Activated naive CD4-positive, alpha-beta T cell treated with anti-CD3 and anti-CD28 coated beads, Interleukin-2, amount 10 ng/mL, durations not matched to agents 7 days and 5 days (primary cell): ENCODE measurements at regions of chr1 and their contacts with region 1.

Region 1: GRCh38 chr1:84772428-84772943 is 82.2 kb upstream of the SSX2IP start:
- DNase-seq: peak; percentile 84
- H3K4me3 Mint-ChIP-seq: no peak overlapping the region
- H3K27ac Mint-ChIP-seq: no peak overlapping the region
- H3K4me1 Mint-ChIP-seq: no peaks in the 10 kb centered on the region
- H3K27me3 Mint-ChIP-seq: peaks cover 29% of the 10 kb centered on the region

Region 2: GRCh38 chr1:84620720-84621313 is 151.7 kb before region 1 on chr1:
- CTCF ChIA-PET with region 1: no interaction called
- DNase-seq: peak; percentile 82
- H3K4me3 Mint-ChIP-seq: peak overlapping the region; percentile 87
- H3K27ac Mint-ChIP-seq: peak overlapping the region; percentile 85
- H3K4me1 Mint-ChIP-seq: peaks cover 14% of the 10 kb centered on the region
- H3K27me3 Mint-ChIP-seq: peaks cover 14% of the 10 kb centered on the region

Region 3: DNA sequence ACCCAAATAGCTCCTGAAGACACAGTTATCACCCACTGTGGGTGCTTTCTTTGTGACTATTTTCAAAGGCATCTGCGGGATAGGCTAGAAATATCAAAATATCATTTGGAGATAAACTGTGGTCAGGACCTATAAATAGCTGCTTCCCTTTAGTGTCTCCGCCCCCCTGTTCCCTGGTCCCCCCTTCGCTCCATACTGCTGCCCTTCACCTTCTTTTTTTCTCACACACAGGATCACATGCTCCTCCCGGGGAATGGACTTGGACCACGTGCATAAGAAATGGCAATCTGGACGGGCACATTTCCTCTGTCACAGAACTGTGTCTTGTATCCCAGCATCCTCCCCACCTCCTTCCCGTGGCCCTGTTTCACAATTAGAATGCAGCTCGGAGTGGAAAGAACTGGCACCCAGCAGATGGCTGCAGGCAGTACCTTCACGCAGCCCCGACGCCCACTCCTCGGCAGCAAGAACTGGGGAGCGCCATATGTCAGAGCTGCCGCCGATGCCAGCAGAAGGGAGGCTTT is 13.5 kb before region 1 on chr1:
- CTCF ChIA-PET with region 1: interaction called, 15 read pairs
- DNase-seq: no peak
- H3K4me3 Mint-ChIP-seq: no peak overlapping the region
- H3K27ac Mint-ChIP-seq: no peak overlapping the region
- H3K4me1 Mint-ChIP-seq: peaks cover 6% of the 10 kb centered on the region
- H3K27me3 Mint-ChIP-seq: peaks cover 20% of the 10 kb centered on the region